Naive thymus-derived CD8-positive, alpha-beta T cell (primary cell): ENCODE measurements at regions of chr4 and their contacts with region 1.

Region 1: DNA sequence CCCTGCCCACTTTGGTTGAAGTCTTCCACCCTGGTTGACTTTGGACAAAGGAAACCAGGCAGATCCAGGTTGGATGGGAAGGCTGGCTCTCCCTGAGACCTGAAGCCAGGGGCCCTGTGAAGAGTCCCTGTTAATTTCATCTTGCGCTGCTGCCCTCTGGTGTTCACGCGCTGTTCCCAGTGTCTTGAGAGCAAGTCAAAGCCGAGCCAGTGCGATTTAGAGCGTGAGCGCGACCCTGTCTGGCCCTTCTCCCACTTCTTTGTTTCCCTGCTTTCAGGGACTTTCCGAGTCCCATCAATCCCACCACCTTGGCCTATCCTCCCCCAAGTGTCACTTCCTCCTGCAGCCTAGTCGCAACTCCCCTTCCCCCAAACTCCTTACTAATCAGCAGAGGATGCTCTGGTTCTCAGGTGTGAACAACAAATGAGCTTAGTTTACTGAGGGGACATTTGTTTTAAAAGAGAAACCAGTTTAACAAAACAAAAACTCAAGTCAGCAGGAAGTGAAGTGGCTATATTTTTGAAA is 25.8 kb upstream of the CHRNA9 start:
- DNase-seq: peak; percentile 81 to 94 (median 87)
- ATAC-seq: peak; percentile 45 to 62
- H3K4me3 Mint-ChIP-seq: peak overlapping the region; percentile 67 to 90 (median 82)
- H3K27ac Mint-ChIP-seq: peak overlapping the region; percentile 97 to 100 (median 99)
- H3K4me1 Mint-ChIP-seq: peaks cover 51 to 86% (median 81%) of the 10 kb centered on the region in 4 donors
- H3K27me3 Mint-ChIP-seq: no peaks in the 10 kb centered on the region

Region 2: GRCh38 chr4:40149960-40150385 is 159.3 kb before region 1 on chr4:
- POLR2A ChIA-PET with region 1: interaction called, 12 read pairs
- DNase-seq: peak; percentile 33 to 87 (median 77)
- ATAC-seq: peak; percentile 85 to 90
- H3K4me3 Mint-ChIP-seq: peak overlapping the region in 6 of 10 donors; percentile 1 to 56 (median 31)
- H3K27ac Mint-ChIP-seq: peak overlapping the region; percentile 69 to 91 (median 88)
- H3K4me1 Mint-ChIP-seq: peaks cover 14 to 45% (median 38%) of the 10 kb centered on the region in 4 donors
- H3K27me3 Mint-ChIP-seq: no peaks in the 10 kb centered on the region

Region 3: GRCh38 chr4:40205259-40206198 is 103.8 kb before region 1 on chr4:
- POLR2A ChIA-PET with region 1: interaction called, 76 read pairs
- DNase-seq: no peak
- ATAC-seq: peak; percentile 29 to 42
- H3K4me3 Mint-ChIP-seq: peak overlapping the region; percentile 94 to 100 (median 98)
- H3K27ac Mint-ChIP-seq: peak overlapping the region; percentile 88 to 100 (median 95)
- H3K4me1 Mint-ChIP-seq: peaks cover 32 to 91% (median 69%) of the 10 kb centered on the region in 4 donors
- H3K27me3 Mint-ChIP-seq: no peaks in the 10 kb centered on the region

Region 4: DNA sequence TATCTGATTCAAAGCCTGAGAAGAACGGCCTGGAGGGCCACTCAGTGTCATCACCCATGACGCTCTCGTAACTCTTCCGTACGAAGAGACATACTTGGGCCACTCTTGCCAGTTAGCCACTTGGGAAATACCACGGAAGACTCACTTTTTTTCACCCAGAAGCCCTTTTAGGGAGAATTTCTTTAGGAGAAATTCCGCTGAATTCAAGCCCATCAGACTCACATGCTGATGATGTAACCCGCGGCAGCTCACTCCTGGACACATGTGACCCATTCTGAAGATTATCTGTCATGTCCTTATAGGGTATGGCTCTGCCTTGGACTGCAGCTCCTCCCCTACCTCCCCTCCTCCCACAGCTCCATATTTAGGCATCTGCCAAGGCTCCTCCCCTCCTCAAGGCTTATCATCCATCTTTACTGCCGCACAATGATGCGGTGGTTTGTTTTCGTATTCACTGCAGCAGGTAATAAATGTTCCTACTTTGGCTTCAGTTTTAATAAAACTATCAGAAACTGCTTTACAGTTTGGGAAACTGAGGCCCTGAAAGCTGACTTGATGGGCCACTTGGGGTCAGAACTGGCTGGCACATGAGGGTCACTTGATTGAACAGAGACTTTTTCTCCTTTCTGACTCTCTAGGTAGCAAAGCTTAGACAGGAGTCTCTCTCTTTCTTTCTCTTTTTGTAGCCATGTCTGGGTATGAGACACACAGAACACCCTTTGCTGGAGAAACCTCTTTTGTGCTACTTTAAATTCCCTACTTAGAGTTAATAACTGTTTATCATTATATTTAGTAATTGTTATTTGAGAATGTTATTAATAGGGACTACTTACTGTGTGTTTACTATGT is 70.4 kb before region 1 on chr4:
- POLR2A ChIA-PET with region 1: interaction called, 52 read pairs
- DNase-seq: peak; percentile 32 to 91 (median 78)
- ATAC-seq: peak; percentile 76 to 92
- H3K4me3 Mint-ChIP-seq: peak overlapping the region; percentile 70 to 89 (median 78)
- H3K27ac Mint-ChIP-seq: peak overlapping the region; percentile 92 to 99 (median 97)
- H3K4me1 Mint-ChIP-seq: peaks cover 43 to 93% (median 91%) of the 10 kb centered on the region in 4 donors
- H3K27me3 Mint-ChIP-seq: no peaks in the 10 kb centered on the region

Region 5: DNA sequence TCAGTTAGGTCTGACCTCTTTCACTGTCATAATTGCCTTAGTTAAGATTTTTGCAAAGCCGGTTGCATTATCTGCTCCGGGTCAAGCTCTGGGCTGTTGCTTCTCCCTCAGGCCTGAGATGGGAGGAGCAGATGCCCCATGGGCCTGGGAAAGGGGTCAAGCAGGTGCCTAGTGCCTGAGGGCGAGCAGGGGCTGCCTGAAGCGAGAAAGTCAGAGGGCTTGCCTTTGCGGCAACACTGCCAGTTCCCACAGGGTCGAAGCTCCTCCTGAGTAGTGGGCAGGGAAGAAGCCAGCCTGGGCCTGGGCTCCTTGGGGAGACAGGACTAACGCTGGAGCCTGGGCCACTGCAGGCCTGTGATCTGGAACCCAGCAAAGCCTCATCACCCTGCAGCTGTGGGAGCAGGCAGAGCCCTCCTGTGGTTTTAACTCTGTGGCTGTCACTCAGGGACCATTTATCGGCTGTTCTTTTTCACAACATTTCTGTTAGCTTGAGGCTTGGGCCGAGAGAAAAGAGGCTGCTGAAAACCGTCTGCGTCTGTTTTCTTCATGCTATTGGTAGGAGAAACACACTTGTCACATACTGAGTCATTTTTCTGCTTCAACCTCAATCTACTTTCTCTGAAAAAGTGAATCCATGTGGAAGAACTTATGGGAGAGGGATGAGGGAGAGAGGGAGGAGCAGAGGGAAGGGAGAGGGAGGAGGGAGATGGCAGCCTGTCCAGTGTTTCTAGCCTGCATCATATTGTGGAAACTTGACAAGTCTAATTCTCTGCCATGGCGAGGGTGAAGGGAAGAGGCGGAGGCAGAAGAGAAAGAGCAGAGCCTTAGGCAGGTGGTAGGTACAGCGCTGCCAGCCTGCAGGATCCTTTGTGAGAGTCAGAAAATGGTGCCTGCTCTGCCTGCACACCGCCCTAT is 44.1 kb before region 1 on chr4:
- POLR2A ChIA-PET with region 1: interaction called, 13 read pairs
- DNase-seq: peak in 9 of 10 donors; percentile 28 to 82 (median 59)
- ATAC-seq: peak; percentile 81 to 83
- H3K4me3 Mint-ChIP-seq: peak overlapping the region; percentile 68 to 91 (median 84)
- H3K27ac Mint-ChIP-seq: peak overlapping the region; percentile 94 to 99 (median 98)
- H3K4me1 Mint-ChIP-seq: peaks cover 37 to 76% (median 70%) of the 10 kb centered on the region in 4 donors
- H3K27me3 Mint-ChIP-seq: no peaks in the 10 kb centered on the region

Region 6: DNA sequence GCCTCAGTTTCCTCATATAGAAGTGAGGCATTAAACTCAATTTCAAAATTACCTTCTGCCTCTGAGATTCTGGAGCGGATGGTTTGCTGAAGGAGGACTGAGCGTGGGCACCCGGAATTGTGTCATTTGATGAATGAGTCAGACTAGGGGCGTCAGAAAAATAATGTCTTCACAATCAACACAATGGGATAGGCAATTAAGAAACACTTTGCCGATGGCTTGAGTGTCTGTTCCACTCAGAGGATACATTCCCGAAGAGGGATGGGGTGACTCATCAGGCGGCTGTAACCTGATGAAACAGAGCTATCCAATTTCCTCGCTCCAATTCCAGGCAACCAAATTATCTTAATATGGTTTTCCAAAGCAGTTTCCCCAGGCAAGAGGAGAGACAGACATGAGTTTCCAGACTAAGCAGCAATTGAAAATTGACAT is 24.6 kb after region 1 on chr4:
- POLR2A ChIA-PET with region 1: no interaction called
- DNase-seq: no peak
- ATAC-seq: no peak
- H3K4me3 Mint-ChIP-seq: no peak overlapping the region
- H3K27ac Mint-ChIP-seq: no peak overlapping the region
- H3K4me1 Mint-ChIP-seq: no peaks in the 10 kb centered on the region
- H3K27me3 Mint-ChIP-seq: peaks cover 0 to 4% (median 0%) of the 10 kb centered on the region in 5 donors

Region 7: DNA sequence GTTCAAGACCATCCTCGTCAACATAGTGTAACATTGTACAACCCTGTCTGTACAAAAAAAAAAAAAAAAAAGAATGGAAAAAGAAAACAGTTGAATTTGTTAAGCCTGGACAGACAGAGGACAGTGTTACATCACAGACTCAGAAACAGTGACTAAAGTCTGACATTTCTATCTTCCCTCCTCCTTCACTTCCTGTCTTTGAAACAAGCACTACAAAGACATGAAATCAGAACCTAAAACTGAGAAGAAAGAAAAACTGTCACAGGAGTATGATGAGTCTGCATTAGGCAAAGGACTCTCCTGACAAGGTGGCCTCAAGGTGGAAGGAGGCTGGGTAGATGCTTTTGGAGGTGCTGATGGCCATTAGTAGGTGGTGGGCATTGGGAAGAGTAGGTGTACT is 193.6 kb after region 1 on chr4:
- POLR2A ChIA-PET with region 1: no interaction called
- DNase-seq: peak in 2 of 10 donors; percentile 22 to 29
- ATAC-seq: peak in 1 of 2 donors; percentile 54
- H3K4me3 Mint-ChIP-seq: peak overlapping the region in 3 of 10 donors; percentile 3 to 59 (median 4)
- H3K27ac Mint-ChIP-seq: peak overlapping the region in 6 of 10 donors; percentile 1 to 86 (median 28)
- H3K4me1 Mint-ChIP-seq: peaks cover 7 to 16% (median 12%) of the 10 kb centered on the region in 4 donors
- H3K27me3 Mint-ChIP-seq: no peaks in the 10 kb centered on the region